GM10248 (cell line): ENCODE measurements at regions of chr16 and their contacts with region 1.

Region 1: DNA sequence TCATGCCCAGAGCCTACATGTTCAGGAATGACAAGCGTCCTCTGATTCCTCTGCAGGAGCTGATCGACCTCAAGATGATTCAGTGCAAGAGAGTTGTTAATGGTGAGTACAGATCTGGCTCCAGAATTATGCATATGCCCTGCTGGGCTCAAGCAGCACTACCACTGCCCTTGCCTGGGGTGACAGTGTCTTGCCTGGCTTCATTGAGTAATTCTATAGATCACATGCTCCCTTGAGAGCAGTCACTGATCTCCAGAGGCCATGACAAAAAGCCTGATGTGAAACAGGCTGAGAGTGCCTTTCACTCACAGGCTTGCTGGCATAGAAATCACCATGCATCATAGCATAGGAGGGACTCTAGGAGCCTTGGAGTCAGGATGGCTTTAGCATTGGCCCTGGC is 26.4 kb downstream of the DUS2 start:
- DNase-seq: no peak
- CTCF ChIP-seq: no peak

Region 2: GRCh38 chr16:67942200-67942509 is 107.3 kb before region 1 on chr16:
- CTCF ChIA-PET with region 1: no interaction called
- POLR2A ChIA-PET with region 1: no interaction called
- DNase-seq: peak; percentile 75
- CTCF ChIP-seq: peak; percentile 68

Region 3: GRCh38 chr16:67979955-67980678 is 69.3 kb before region 1 on chr16 and contains the start of gene DPEP3:
- CTCF ChIA-PET with region 1: no interaction called
- POLR2A ChIA-PET with region 1: no interaction called
- DNase-seq: no peak
- CTCF ChIP-seq: peak; percentile 22

Region 4: DNA sequence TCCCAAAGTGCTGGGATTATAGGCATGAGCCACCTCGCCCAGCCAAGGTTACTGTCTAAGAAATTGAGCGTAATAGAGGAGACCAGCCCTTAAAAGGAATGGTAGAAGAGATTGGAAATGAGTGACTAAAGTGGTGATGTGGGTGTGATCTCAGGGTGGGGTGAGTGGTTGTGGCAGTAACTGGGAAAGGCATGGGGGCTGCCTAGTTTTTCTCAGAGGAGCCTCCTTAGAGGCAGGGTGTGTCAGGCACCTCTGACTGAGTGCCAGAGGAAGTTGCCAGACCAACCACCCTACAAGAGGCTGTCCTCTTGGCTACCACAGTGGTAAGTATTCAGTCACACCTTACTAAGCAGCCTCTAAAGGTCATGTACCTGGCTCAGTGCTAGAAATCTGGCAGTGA is 17.5 kb before region 1 on chr16:
- CTCF ChIA-PET with region 1: no interaction called
- POLR2A ChIA-PET with region 1: no interaction called
- DNase-seq: no peak
- CTCF ChIP-seq: no peak

Region 5: DNA sequence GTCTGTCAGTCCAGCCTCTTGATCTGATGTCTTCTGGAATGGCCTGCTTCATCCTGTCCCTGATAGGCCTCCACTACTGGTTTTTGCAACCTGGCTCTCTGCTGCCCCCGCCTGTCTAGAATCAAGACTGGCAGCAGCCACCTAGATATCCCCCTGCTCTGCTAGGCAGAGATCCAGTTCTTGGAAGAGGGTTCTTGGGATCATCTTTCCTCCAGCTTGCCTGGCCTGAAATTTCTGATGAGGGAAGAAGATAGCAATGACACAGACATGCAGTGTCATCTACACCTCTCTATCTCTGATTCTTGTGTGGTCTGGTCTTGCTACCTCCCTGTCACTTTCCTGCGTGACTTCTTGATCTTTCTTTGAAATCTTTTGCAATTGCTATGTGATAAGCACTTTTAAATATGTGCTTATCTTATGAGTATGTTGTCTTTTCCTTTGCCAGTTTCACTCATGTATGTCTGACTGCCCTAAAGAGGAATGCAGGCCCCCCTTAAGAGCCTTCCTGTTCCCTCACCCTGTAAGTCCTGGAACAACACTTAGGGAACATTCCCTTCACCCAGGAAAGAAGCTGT is 15.4 kb after region 1 on chr16:
- CTCF ChIA-PET with region 1: interaction called, 10 read pairs
- POLR2A ChIA-PET with region 1: no interaction called
- DNase-seq: peak; percentile 67
- CTCF ChIP-seq: peak; percentile 78